ENCODE measurements at regions of chr11 and their contacts with region 1.

Region 1: GRCh38 chr11:13238879-13239514 is 38.6 kb upstream of the BMAL1 start:
- DNase-seq: peak; percentile 21 to 76 (median 46)
- ATAC-seq: peak; percentile 73
- H3K4me3 ChIP-seq: no peak overlapping the region
- H3K4me3 Mint-ChIP-seq: no peak overlapping the region
- H3K27ac ChIP-seq: no peak overlapping the region
- H3K27ac Mint-ChIP-seq: no peak overlapping the region
- H3K4me1 ChIP-seq: no peaks in the 10 kb centered on the region
- H3K4me1 Mint-ChIP-seq: no peaks in the 10 kb centered on the region
- H3K27me3 ChIP-seq: peaks cover 0 to 4% of the 10 kb centered on the region in 2 experiments
- H3K27me3 Mint-ChIP-seq: peaks cover 23% of the 10 kb centered on the region
- CTCF ChIP-seq: peak; percentile 90

Region 2: GRCh38 chr11:12963792-12964536 is 275.0 kb before region 1 on chr11:
- CTCF ChIA-PET with region 1: no interaction called
- POLR2A ChIA-PET with region 1: no interaction called
- intact Hi-C with region 1: loop called (anchors 1 to 10 kb)
- DNase-seq: peak; percentile 20 to 70 (median 46)
- ATAC-seq: peak; percentile 65
- H3K4me3 ChIP-seq: no peak overlapping the region
- H3K4me3 Mint-ChIP-seq: no peak overlapping the region
- H3K27ac ChIP-seq: no peak overlapping the region
- H3K27ac Mint-ChIP-seq: no peak overlapping the region
- H3K4me1 ChIP-seq: no peaks in the 10 kb centered on the region
- H3K4me1 Mint-ChIP-seq: no peaks in the 10 kb centered on the region
- H3K27me3 ChIP-seq: peaks cover 5 to 11% of the 10 kb centered on the region in 2 experiments
- H3K27me3 Mint-ChIP-seq: peaks cover 47% of the 10 kb centered on the region
- CTCF ChIP-seq: peak; percentile 67

Region 3: GRCh38 chr11:13183094-13183825 is 55.7 kb before region 1 on chr11:
- CTCF ChIA-PET with region 1: no interaction called
- POLR2A ChIA-PET with region 1: no interaction called
- intact Hi-C with region 1: loop called (anchors 2 kb)
- DNase-seq: peak in 4 of 14 experiments; percentile 18 to 47 (median 42)
- ATAC-seq: no peak
- H3K4me3 ChIP-seq: no peak overlapping the region
- H3K4me3 Mint-ChIP-seq: peak overlapping the region; percentile 14
- H3K27ac ChIP-seq: no peak overlapping the region
- H3K27ac Mint-ChIP-seq: no peak overlapping the region
- H3K4me1 ChIP-seq: no peaks in the 10 kb centered on the region
- H3K4me1 Mint-ChIP-seq: peaks cover 8% of the 10 kb centered on the region
- H3K27me3 ChIP-seq: peaks cover 0 to 6% of the 10 kb centered on the region in 2 experiments
- H3K27me3 Mint-ChIP-seq: peaks cover 24% of the 10 kb centered on the region
- CTCF ChIP-seq: peak; percentile 62

Region 4: DNA sequence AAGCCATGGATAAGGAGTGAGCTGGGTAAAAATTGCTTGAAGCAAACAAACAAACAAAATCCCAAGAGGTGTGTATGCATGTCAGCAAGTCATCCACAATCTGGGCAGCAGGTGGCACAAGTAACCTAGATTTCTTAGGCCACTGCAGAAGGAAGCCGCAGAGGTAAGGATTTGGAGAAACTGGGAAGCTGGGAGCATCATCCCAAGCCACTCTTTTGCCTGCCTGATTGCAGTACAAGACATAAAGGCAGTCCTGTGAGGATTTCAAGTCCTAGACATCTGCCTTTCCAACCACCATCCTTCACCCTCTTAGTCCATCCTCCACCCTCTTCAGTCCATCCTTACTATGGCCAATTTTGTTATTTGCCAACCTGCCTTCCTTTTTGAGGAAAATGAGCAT is 28.6 kb before region 1 on chr11:
- CTCF ChIA-PET with region 1: no interaction called
- POLR2A ChIA-PET with region 1: no interaction called
- intact Hi-C with region 1: loop called in 1 of 2 experiments (anchors 2 kb)
- DNase-seq: peak in 6 of 14 experiments; percentile 17 to 59 (median 30)
- ATAC-seq: no peak
- H3K4me3 ChIP-seq: no peak overlapping the region
- H3K4me3 Mint-ChIP-seq: no peak overlapping the region
- H3K27ac ChIP-seq: no peak overlapping the region
- H3K27ac Mint-ChIP-seq: no peak overlapping the region
- H3K4me1 ChIP-seq: peaks cover 14% of the 10 kb centered on the region
- H3K4me1 Mint-ChIP-seq: peaks cover 31% of the 10 kb centered on the region
- H3K27me3 ChIP-seq: no peaks in the 10 kb centered on the region
- H3K27me3 Mint-ChIP-seq: no peaks in the 10 kb centered on the region
- CTCF ChIP-seq: peak; percentile 38

Region 5: GRCh38 chr11:13222285-13222684 is 16.7 kb before region 1 on chr11:
- CTCF ChIA-PET with region 1: no interaction called
- POLR2A ChIA-PET with region 1: no interaction called
- intact Hi-C with region 1: no loop called
- DNase-seq: no peak
- ATAC-seq: no peak
- H3K4me3 ChIP-seq: no peak overlapping the region
- H3K4me3 Mint-ChIP-seq: no peak overlapping the region
- H3K27ac ChIP-seq: no peak overlapping the region
- H3K27ac Mint-ChIP-seq: no peak overlapping the region
- H3K4me1 ChIP-seq: no peaks in the 10 kb centered on the region
- H3K4me1 Mint-ChIP-seq: no peaks in the 10 kb centered on the region
- H3K27me3 ChIP-seq: no peaks in the 10 kb centered on the region
- H3K27me3 Mint-ChIP-seq: no peaks in the 10 kb centered on the region
- CTCF ChIP-seq: no peak

Region 6: DNA sequence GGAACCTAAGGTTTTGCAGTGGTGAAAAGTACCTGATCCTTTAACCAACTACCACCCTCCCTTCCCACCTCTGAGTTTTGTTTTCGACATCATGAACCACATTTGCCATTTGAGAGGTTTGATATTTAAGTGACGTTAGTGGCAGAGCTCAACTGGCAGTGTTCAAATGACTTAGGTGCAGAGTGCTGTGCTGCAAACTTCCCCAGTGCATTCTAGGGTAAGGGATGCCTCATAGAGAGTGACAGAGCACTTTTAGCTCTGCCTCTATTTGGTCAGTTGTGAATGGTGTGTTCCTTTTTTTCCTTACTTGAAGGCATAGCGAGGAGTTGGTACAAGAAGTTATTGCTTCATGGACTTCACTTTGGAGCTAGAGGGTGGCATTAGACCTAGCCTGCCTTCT is 48.0 kb after region 1 on chr11:
- CTCF ChIA-PET with region 1: no interaction called
- POLR2A ChIA-PET with region 1: no interaction called
- intact Hi-C with region 1: loop called in 1 of 2 experiments (anchors 2 kb)
- DNase-seq: peak in 3 of 14 experiments; percentile 25 to 39 (median 38)
- ATAC-seq: peak; percentile 72
- H3K4me3 ChIP-seq: no peak overlapping the region
- H3K4me3 Mint-ChIP-seq: no peak overlapping the region
- H3K27ac ChIP-seq: no peak overlapping the region
- H3K27ac Mint-ChIP-seq: peak overlapping the region; percentile 7
- H3K4me1 ChIP-seq: peaks cover 47% of the 10 kb centered on the region
- H3K4me1 Mint-ChIP-seq: peaks cover 91% of the 10 kb centered on the region
- H3K27me3 ChIP-seq: no peaks in the 10 kb centered on the region
- H3K27me3 Mint-ChIP-seq: no peaks in the 10 kb centered on the region
- CTCF ChIP-seq: no peak

Region 7: GRCh38 chr11:13335319-13335718 is 96.3 kb after region 1 on chr11:
- CTCF ChIA-PET with region 1: interaction called, 7 read pairs
- POLR2A ChIA-PET with region 1: no interaction called
- intact Hi-C with region 1: loop called in 1 of 2 experiments (anchors 5 kb)
- DNase-seq: peak; percentile 52 to 85 (median 66)
- ATAC-seq: peak; percentile 66
- H3K4me3 ChIP-seq: no peak overlapping the region
- H3K4me3 Mint-ChIP-seq: no peak overlapping the region
- H3K27ac ChIP-seq: no peak overlapping the region
- H3K27ac Mint-ChIP-seq: peak overlapping the region; percentile 2
- H3K4me1 ChIP-seq: peaks cover 68% of the 10 kb centered on the region
- H3K4me1 Mint-ChIP-seq: peaks cover 87% of the 10 kb centered on the region
- H3K27me3 ChIP-seq: no peaks in the 10 kb centered on the region
- H3K27me3 Mint-ChIP-seq: no peaks in the 10 kb centered on the region
- CTCF ChIP-seq: peak; percentile 73

Measured in CD4-positive, alpha-beta T cell (primary cell).